ENCODE measurements at regions of chrX and their contacts with region 1.

Region 1: DNA sequence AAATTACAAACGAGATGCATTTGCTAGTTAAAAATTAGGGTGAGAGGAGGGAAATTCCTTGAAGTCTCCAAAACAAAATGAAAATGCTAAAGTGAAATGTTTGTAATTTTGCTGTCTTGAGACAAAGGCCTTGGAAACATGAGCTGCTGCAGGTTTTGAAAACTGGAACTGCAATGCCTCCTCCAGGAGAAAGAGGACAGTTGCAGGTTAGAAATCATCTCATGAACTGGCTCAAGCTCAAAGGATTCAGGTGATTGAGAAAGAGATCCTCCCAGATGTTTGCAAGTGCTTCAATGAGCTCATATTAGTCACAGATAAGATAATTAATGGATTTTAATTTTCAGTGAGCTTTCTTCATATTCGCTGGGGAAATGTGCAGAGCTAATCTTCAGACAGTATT is 32.4 kb downstream of the SMPX start:
- DNase-seq: peak; percentile 66
- ATAC-seq: peak; percentile 56
- H3K4me3 ChIP-seq: no peak overlapping the region
- H3K27ac ChIP-seq: no peak overlapping the region
- H3K4me1 ChIP-seq: no peaks in the 10 kb centered on the region
- H3K27me3 ChIP-seq: no peaks in the 10 kb centered on the region
- CTCF ChIP-seq: peak; percentile 77

Region 2: GRCh38 chrX:21479695-21480270 is 245.7 kb before region 1 on chrX:
- CTCF ChIA-PET with region 1: interaction called, 3 read pairs
- POLR2A ChIA-PET with region 1: no interaction called
- intact Hi-C with region 1: loop called (anchors 2 kb)
- DNase-seq: peak; percentile 76
- ATAC-seq: peak; percentile 78
- H3K4me3 ChIP-seq: no peak overlapping the region
- H3K27ac ChIP-seq: no peak overlapping the region
- H3K4me1 ChIP-seq: no peaks in the 10 kb centered on the region
- H3K27me3 ChIP-seq: no peaks in the 10 kb centered on the region
- CTCF ChIP-seq: peak; percentile 70

Region 3: DNA sequence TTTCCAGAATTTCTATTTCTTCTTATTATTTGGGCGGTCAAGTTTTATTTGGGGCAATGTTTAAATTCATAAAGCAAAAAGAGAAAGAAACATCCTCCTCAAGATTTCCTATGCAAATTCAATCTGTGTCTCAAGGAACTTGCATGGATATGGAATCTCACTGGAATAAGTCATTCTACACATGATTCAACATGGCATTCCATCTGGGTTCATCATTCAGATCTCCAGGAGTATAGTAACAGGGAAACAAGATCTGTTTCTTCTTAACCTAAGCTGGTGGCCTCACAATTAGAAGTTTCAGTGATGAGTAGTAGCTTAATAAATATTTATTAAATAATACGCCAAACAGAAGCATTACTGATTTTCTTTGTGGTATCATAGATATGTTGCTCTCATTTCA is 87.2 kb before region 1 on chrX:
- CTCF ChIA-PET with region 1: no interaction called
- POLR2A ChIA-PET with region 1: no interaction called
- intact Hi-C with region 1: no loop called
- DNase-seq: peak; percentile 47
- ATAC-seq: no peak; the same call in 1 of the 2 replicates
- H3K4me3 ChIP-seq: no peak overlapping the region
- H3K27ac ChIP-seq: no peak overlapping the region
- H3K4me1 ChIP-seq: no peaks in the 10 kb centered on the region; the same call in 1 of the 2 replicates
- H3K27me3 ChIP-seq: no peaks in the 10 kb centered on the region
- CTCF ChIP-seq: no peak

Region 4: DNA sequence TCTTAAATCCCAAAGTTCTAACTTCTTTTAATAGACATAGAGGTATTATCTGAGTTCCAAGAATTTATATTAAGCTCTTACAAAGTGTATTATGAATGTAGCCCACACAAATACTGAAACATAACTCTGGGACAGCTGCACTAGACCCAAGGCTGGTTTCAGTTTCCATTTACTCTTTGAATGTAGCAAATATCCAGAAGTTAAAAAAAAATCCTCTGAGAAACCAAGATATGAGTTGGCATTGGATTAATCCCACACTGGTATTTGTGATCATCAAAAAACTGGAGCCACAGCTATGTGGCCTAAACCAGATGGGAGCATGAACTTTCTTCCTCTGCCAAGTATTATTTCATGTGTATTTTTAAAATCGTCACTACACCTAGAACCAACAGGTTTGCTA is 56.0 kb after region 1 on chrX:
- CTCF ChIA-PET with region 1: no interaction called
- POLR2A ChIA-PET with region 1: no interaction called
- intact Hi-C with region 1: no loop called
- DNase-seq: no peak
- ATAC-seq: no peak
- H3K4me3 ChIP-seq: no peak overlapping the region
- H3K27ac ChIP-seq: no peak overlapping the region
- H3K4me1 ChIP-seq: no peaks in the 10 kb centered on the region
- H3K27me3 ChIP-seq: no peaks in the 10 kb centered on the region
- CTCF ChIP-seq: no peak